Endothelial cell of umbilical vein (primary cell): ENCODE measurements at regions of chr17 and their contacts with region 1.

Region 1: DNA sequence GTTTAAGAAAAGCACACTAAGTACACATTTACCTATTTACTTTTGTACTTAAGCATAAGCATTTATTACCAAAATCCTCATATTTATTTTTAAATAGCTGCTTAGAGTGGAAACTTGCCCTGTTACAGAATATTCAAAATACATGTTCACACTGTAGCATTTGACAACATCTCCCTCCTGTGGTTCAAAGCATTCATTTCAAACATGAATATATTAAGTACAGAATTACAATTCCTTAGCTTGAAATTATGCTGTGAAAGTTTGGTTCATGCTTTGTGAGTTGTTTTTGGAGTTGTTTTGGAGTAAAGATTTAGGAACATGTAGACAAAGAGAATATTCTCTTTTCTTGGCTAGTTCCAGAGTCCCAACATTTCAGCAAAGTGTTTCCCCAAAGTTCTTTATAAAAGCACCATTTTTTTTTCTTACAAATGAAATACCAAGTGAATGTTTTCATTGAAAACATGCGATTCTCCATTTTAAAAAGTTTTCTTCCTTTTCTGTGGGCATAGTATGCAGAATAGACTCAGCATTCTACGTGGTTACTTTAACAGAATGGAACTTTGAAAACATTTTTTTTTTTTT is 33.2 kb downstream of the TUBD1 start:
- DNase-seq: peak; percentile 76
- H3K4me3 ChIP-seq: no peak overlapping the region
- H3K27ac ChIP-seq: no peak overlapping the region
- H3K4me1 ChIP-seq: peaks cover 14% of the 10 kb centered on the region
- H3K27me3 ChIP-seq: no peaks in the 10 kb centered on the region
- CTCF ChIP-seq: peak; percentile 29 to 45
- POLR2A ChIP-seq: no peak

Region 2: GRCh38 chr17:59311130-59311920 is 548.2 kb before region 1 on chr17:
- CTCF ChIA-PET with region 1: interaction called, 12 read pairs
- POLR2A ChIA-PET with region 1: no interaction called
- dilution Hi-C with region 1: no loop called
- intact Hi-C with region 1: no loop called
- DNase-seq: peak; percentile 79
- H3K4me3 ChIP-seq: no peak overlapping the region
- H3K27ac ChIP-seq: no peak overlapping the region
- H3K4me1 ChIP-seq: no peaks in the 10 kb centered on the region
- H3K27me3 ChIP-seq: no peaks in the 10 kb centered on the region
- CTCF ChIP-seq: peak; percentile 64 to 67
- POLR2A ChIP-seq: no peak

Region 3: DNA sequence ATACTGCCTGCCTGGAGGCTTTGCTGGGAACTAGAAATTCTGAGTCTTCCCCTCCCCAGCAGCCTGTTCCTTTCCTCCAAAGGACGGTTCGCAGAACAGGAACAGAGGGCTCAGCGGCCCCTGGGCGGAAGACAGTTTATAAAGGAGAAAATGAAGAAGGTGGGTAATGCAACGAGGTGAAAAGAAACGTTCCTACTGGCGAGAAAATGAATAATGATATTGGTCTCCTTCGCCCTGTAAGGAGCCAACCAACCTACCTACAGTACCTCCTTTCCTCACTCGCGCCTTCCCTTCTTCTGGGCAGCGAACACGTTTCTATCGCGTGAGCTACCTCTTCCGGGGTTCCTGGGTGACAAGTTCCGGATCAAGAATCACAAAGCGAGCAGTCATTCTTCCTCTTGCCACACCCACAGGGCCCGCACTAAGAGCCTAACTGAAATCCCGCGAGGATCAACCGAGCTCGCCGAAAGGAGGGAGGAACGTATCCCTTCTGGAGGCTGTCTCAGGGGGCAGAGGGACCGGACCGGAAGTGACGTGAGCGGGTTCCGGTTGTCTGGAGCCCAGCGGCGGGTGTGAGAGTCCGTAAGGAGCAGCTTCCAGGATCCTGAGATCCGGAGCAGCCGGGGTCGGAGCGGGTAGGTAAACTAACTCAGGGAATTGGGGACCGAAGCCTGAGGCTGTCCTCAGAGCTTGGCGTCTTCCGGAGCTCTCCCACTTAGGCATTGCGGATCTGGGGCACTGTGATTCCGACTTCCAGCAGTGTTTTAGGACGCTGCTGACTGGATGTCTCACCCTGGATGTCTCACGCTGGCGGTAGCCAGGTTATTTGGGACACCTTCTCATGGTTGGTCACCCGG is 152.2 kb before region 1 on chr17 and contains the starts of genes PTRH2 and VMP1:
- CTCF ChIA-PET with region 1: interaction called, 39 read pairs
- POLR2A ChIA-PET with region 1: interaction called, 5 read pairs
- dilution Hi-C with region 1: no loop called
- intact Hi-C with region 1: no loop called
- DNase-seq: peak; percentile 100
- H3K4me3 ChIP-seq: peak within 1 kb of the TSS; percentile 59 to 90 (median 89)
- H3K27ac ChIP-seq: peak within 1 kb of the TSS; percentile 97
- H3K4me1 ChIP-seq: peaks cover 26% of the 10 kb centered on the region
- H3K27me3 ChIP-seq: no peaks in the 10 kb centered on the region
- CTCF ChIP-seq: no peak
- POLR2A ChIP-seq: peak; percentile 94
- total RNA-seq, gene PTRH2: 40.1 and 41.2 TPM in 2 replicates
- total RNA-seq, gene VMP1: 270 and 321 TPM in 2 replicates

Region 4: GRCh38 chr17:59753522-59754467 is 105.7 kb before region 1 on chr17:
- CTCF ChIA-PET with region 1: interaction called, 5 read pairs
- POLR2A ChIA-PET with region 1: interaction called, 14 read pairs
- dilution Hi-C with region 1: no loop called
- intact Hi-C with region 1: loop called (anchors 1 kb)
- DNase-seq: peak; percentile 95
- H3K4me3 ChIP-seq: peak overlapping the region in 1 of 3 experiments; percentile 48
- H3K27ac ChIP-seq: peak overlapping the region; percentile 100
- H3K4me1 ChIP-seq: peaks cover 52% of the 10 kb centered on the region
- H3K27me3 ChIP-seq: no peaks in the 10 kb centered on the region
- CTCF ChIP-seq: peak; percentile 47
- POLR2A ChIP-seq: peak; percentile 22

Region 5: GRCh38 chr17:59815965-59816364 is 43.6 kb before region 1 on chr17:
- CTCF ChIA-PET with region 1: no interaction called
- POLR2A ChIA-PET with region 1: no interaction called
- dilution Hi-C with region 1: no loop called
- intact Hi-C with region 1: no loop called
- DNase-seq: no peak
- H3K4me3 ChIP-seq: no peak overlapping the region
- H3K27ac ChIP-seq: no peak overlapping the region
- H3K4me1 ChIP-seq: no peaks in the 10 kb centered on the region
- H3K27me3 ChIP-seq: no peaks in the 10 kb centered on the region
- CTCF ChIP-seq: no peak
- POLR2A ChIP-seq: no peak

Region 6: DNA sequence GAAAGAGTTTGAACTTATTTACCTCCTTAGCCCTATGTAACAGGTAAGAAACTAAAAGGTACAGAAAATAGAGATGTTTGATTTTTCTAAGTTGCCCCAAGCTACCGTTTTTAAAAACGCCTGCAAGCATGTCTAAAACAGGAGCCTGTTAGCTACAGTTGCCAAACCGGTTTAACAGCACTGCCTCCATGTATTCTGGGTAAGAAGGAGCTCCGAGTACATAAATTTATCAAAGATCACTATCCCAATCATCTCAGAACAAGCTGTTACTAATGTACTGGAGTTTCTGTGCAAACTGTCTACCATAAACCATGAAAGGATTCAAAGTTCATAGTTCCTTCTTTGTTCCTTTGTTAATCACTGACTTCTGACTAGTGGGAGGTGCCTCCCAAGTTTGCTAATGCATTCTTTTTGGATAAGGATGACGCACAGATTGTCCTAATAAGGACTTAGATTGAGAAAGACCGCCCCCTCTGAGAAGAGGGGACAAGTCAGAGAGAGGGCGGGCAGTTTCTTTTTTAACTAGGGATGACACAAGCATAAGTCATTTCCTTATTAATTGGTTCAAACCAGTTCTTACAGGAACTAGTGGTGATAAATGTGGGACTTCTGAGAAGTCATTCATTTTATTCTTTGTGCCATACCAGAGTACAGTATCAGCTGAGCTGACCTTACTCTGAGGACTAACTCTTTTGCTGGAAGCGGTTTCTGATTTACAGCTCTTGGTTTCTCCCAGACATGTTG is 22.1 kb before region 1 on chr17:
- CTCF ChIA-PET with region 1: interaction called, 7 read pairs
- POLR2A ChIA-PET with region 1: interaction called, 15 read pairs
- dilution Hi-C with region 1: no loop called
- intact Hi-C with region 1: no loop called
- DNase-seq: peak; percentile 99
- H3K4me3 ChIP-seq: peak overlapping the region; percentile 76 to 100 (median 99)
- H3K27ac ChIP-seq: peak overlapping the region; percentile 100
- H3K4me1 ChIP-seq: peaks cover 13% of the 10 kb centered on the region
- H3K27me3 ChIP-seq: no peaks in the 10 kb centered on the region
- CTCF ChIP-seq: no peak
- POLR2A ChIP-seq: peak; percentile 100

Region 7: GRCh38 chr17:60036796-60037612 is 177.5 kb after region 1 on chr17:
- CTCF ChIA-PET with region 1: interaction called, 5 read pairs
- POLR2A ChIA-PET with region 1: no interaction called
- dilution Hi-C with region 1: no loop called
- intact Hi-C with region 1: loop called (anchors 10 kb)
- DNase-seq: peak; percentile 75
- H3K4me3 ChIP-seq: no peak overlapping the region
- H3K27ac ChIP-seq: no peak overlapping the region
- H3K4me1 ChIP-seq: peaks cover 4% of the 10 kb centered on the region
- H3K27me3 ChIP-seq: peaks cover 4 to 13% of the 10 kb centered on the region in 2 experiments
- CTCF ChIP-seq: peak; percentile 96 to 97
- POLR2A ChIP-seq: no peak